ENCODE measurements at regions of chr1 and their contacts with region 1.

Region 1: DNA sequence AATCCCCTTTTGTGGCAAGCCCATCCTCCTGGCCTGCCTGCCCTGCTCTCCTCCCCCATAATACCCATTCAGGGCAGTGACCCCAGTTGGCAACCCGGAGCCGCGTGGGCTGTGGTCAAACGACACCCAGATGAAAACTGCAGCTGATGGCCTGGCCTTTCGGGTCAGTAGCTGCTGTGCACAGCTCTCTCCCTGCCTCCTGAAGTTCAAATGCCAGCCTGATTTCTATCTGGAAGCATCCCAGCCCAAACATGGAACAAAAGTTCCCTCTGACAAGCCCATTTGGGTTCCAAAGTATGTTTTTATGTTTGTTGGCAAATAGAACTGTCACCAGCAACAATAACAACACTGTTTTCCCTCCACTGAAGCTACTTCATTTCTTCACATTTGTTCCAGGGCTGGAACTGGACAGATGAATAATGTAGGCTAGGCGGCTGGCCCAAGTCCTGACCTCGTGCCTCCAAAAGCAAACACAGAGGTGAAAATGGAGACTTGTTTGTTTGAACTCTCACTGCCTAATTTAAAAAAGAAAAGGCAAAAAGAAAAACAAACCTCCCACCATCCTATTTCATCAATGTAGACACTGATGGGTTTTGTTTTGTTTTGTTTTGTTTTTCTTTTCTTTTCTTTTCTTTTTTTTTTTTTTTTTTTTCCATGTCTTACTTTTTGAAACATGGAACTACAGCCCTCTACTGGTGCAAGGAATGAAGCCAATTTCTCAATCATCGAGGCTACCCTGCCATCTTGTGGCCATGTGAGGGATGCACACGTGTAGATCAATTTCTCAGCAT is 179.0 kb downstream of the ADSS2 start:
- DNase-seq: peak; percentile 94
- ATAC-seq: peak; percentile 32
- H3K4me3 ChIP-seq: peak overlapping the region; percentile 60; the same call in 1 of the 2 replicates
- H3K27ac ChIP-seq: no peak overlapping the region
- H3K4me1 ChIP-seq: peaks cover 33% of the 10 kb centered on the region
- H3K27me3 ChIP-seq: no peaks in the 10 kb centered on the region
- CTCF ChIP-seq: peak; percentile 100

Region 2: GRCh38 chr1:243708210-243708609 is 564.5 kb before region 1 on chr1:
- CTCF ChIA-PET with region 1: interaction called, 7 read pairs
- POLR2A ChIA-PET with region 1: no interaction called
- intact Hi-C with region 1: loop called (anchors 1 kb)
- DNase-seq: peak; percentile 50
- ATAC-seq: no peak
- H3K4me3 ChIP-seq: no peak overlapping the region
- H3K27ac ChIP-seq: no peak overlapping the region
- H3K4me1 ChIP-seq: peaks cover 15% of the 10 kb centered on the region
- H3K27me3 ChIP-seq: no peaks in the 10 kb centered on the region
- CTCF ChIP-seq: peak; percentile 86

Region 3: DNA sequence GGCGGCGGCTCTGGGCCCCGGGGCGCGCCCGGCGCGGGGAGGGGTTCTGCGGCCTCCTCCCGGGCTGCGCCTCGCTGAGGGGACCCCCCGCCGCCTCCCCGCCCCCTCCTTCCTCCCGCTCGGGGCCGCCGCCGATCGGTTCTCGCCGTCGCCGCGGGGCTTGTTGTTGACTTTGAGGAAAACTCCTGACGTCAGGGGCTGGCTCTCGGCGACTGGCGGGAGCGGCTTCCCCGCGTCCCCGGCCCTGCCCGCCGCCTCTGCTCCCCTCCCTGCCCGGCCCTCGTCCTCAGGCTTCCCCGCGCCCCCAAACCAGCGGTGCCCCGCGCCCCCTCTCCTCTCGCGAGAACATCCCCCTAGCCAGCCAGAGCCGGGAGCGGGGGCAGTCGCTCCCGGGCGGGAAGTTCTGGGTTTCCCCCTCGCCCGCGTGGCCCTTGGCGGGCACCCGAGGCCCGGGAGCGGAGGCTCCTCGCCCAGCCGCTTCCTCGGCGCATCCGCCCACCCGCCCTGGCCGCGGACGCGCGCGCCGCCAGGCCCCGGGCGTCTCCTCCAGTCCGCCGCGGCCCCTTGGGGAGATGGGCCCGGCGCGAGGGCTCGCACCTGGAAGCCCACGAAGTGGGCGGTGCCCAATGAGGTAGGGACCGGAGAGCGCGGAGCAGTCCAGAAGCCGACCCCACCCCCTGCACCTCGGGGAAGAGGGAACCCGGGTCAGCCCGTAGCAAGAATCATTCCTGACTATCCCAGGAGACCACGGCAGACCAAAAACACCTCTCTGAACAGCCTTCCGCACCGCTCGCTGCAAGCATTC is 422.0 kb before region 1 on chr1:
- CTCF ChIA-PET with region 1: no interaction called
- POLR2A ChIA-PET with region 1: no interaction called
- intact Hi-C with region 1: loop called (anchors 1 kb)
- DNase-seq: peak; percentile 84
- ATAC-seq: peak; percentile 59
- H3K4me3 ChIP-seq: peak overlapping the region; percentile 70
- H3K27ac ChIP-seq: peak overlapping the region; percentile 88
- H3K4me1 ChIP-seq: peaks cover 29% of the 10 kb centered on the region
- H3K27me3 ChIP-seq: no peaks in the 10 kb centered on the region
- CTCF ChIP-seq: no peak

Region 4: GRCh38 chr1:244012202-244012601 is 260.5 kb before region 1 on chr1:
- CTCF ChIA-PET with region 1: no interaction called
- POLR2A ChIA-PET with region 1: no interaction called
- intact Hi-C with region 1: loop called (anchors 10 kb)
- DNase-seq: peak; percentile 97
- ATAC-seq: peak; percentile 89
- H3K4me3 ChIP-seq: peak overlapping the region; percentile 50
- H3K27ac ChIP-seq: no peak overlapping the region
- H3K4me1 ChIP-seq: peaks cover 7% of the 10 kb centered on the region
- H3K27me3 ChIP-seq: no peaks in the 10 kb centered on the region
- CTCF ChIP-seq: no peak

Region 5: DNA sequence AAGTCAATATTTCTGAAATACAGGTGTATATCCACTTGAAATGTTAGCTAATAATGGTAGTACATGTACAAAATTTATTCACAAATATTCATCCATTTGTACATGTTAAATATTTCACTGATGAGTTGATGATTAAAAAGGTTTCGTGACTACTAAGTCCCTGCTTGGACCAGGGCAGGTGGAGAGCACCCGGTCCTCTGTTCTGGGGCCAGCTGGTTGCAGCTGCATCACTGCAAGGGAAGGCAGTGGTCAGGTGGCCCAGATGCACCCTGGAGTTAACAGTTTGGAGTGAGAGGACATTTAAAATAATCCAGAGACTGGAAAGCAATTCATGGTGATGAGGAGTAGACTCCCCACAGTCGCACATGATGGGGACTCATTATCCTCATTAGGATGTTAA is 80.3 kb before region 1 on chr1:
- CTCF ChIA-PET with region 1: no interaction called
- POLR2A ChIA-PET with region 1: no interaction called
- intact Hi-C with region 1: no loop called
- DNase-seq: no peak
- ATAC-seq: no peak
- H3K4me3 ChIP-seq: no peak overlapping the region
- H3K27ac ChIP-seq: no peak overlapping the region
- H3K4me1 ChIP-seq: 0 out of 2 replicates have a peak, but pooled peaks cover under 1% of the 10 kb centered on the region
- H3K27me3 ChIP-seq: no peaks in the 10 kb centered on the region
- CTCF ChIP-seq: no peak

Region 6: GRCh38 chr1:244224487-244225430 is 47.9 kb before region 1 on chr1:
- CTCF ChIA-PET with region 1: no interaction called
- POLR2A ChIA-PET with region 1: no interaction called
- intact Hi-C with region 1: no loop called
- DNase-seq: no peak
- ATAC-seq: no peak
- H3K4me3 ChIP-seq: no peak overlapping the region
- H3K27ac ChIP-seq: no peak overlapping the region
- H3K4me1 ChIP-seq: peaks cover 17% of the 10 kb centered on the region
- H3K27me3 ChIP-seq: no peaks in the 10 kb centered on the region
- CTCF ChIP-seq: no peak

Region 7: GRCh38 chr1:244302889-244303613 is 30.4 kb after region 1 on chr1:
- CTCF ChIA-PET with region 1: interaction called, 3 read pairs
- POLR2A ChIA-PET with region 1: no interaction called
- intact Hi-C with region 1: loop called (anchors 1 kb)
- DNase-seq: peak; percentile 80
- ATAC-seq: peak; percentile 84
- H3K4me3 ChIP-seq: no peak overlapping the region
- H3K27ac ChIP-seq: no peak overlapping the region
- H3K4me1 ChIP-seq: peaks cover 15% of the 10 kb centered on the region
- H3K27me3 ChIP-seq: no peaks in the 10 kb centered on the region
- CTCF ChIP-seq: no peak